ENCODE measurements at regions of chr4 and their contacts with region 1.

Region 1: DNA sequence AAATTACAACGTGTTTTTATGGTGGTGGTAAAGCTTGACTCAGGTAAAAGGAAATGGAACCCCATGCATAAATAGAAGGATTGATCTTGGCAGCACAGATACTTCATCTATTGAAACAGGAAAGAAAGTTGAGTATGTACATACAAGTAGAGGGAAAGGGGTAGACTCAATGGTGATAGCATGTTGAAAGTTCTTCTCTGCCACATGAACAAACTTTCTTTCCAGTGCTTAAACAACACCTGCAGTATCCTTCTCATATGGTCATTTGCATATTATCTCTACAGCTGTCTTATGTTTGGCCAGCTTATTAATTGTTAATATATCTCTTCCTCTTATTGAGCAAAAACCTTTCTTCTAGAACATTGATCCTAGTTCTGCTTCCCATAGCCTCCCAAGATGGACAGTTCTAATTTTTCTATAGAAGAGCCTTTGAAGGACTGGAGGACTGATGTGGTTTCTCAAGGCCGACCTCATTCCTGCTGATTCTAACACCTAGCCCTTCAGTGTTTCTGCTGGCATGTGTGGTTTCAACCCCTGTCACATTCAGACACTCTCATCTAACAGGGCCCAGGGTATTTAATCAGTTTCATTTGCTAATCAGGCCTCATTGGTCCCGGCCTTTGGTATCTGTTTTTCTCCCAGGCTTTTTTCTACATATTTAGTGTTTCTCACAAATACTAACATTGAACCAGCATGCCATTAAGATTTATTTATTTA is 108.1 kb upstream of the SPRY1 start:
- DNase-seq: no peak
- ATAC-seq: no peak
- H3K4me3 ChIP-seq: no peak overlapping the region
- H3K27ac ChIP-seq: no peak overlapping the region
- H3K4me1 ChIP-seq: no peaks in the 10 kb centered on the region
- H3K27me3 ChIP-seq: no peaks in the 10 kb centered on the region
- CTCF ChIP-seq: no peak

Region 2: GRCh38 chr4:122963216-122963615 is 325.3 kb before region 1 on chr4:
- CTCF ChIA-PET with region 1: no interaction called
- POLR2A ChIA-PET with region 1: no interaction called
- in situ Hi-C with region 1: no loop called
- intact Hi-C with region 1: no loop called
- DNase-seq: no peak
- ATAC-seq: no peak
- H3K4me3 ChIP-seq: no peak overlapping the region
- H3K27ac ChIP-seq: no peak overlapping the region
- H3K4me1 ChIP-seq: peaks cover 1% of the 10 kb centered on the region; the same call in 1 of the 2 replicates
- H3K27me3 ChIP-seq: no peaks in the 10 kb centered on the region
- CTCF ChIP-seq: no peak

Region 3: GRCh38 chr4:123259676-123260646 is 28.5 kb before region 1 on chr4:
- CTCF ChIA-PET with region 1: interaction called, 19 read pairs
- POLR2A ChIA-PET with region 1: no interaction called
- in situ Hi-C with region 1: no loop called
- intact Hi-C with region 1: no loop called
- DNase-seq: no peak
- ATAC-seq: no peak
- H3K4me3 ChIP-seq: no peak overlapping the region
- H3K27ac ChIP-seq: no peak overlapping the region
- H3K4me1 ChIP-seq: no peaks in the 10 kb centered on the region
- H3K27me3 ChIP-seq: no peaks in the 10 kb centered on the region
- CTCF ChIP-seq: no peak

Region 4: DNA sequence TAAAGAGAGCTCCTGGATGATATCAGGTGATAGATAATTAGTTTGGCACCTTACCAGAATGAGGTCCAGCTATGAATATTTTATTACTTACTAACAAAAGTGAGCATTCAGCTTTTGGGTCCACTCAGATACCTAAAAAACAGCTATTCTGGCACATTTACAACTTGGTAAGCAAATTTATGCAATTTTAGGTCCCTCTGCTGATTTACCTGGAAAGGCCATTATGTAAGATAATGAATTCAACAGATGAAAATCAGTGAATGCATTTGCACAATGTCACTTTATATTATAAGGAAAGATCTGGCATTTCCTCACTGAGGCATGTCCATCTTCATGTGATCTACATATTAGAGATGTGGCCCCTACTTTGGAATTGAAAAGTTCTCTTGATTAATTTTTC is 625.1 kb after region 1 on chr4:
- CTCF ChIA-PET with region 1: no interaction called
- POLR2A ChIA-PET with region 1: no interaction called
- in situ Hi-C with region 1: no loop called
- intact Hi-C with region 1: no loop called
- DNase-seq: no peak
- ATAC-seq: no peak
- H3K4me3 ChIP-seq: no peak overlapping the region
- H3K27ac ChIP-seq: no peak overlapping the region
- H3K4me1 ChIP-seq: no peaks in the 10 kb centered on the region
- H3K27me3 ChIP-seq: no peaks in the 10 kb centered on the region
- CTCF ChIP-seq: no peak

Measured in Panc1 (cell line).